OCI-LY7 (cell line): ENCODE measurements at regions of chr1 and their contacts with region 1.

Region 1: DNA sequence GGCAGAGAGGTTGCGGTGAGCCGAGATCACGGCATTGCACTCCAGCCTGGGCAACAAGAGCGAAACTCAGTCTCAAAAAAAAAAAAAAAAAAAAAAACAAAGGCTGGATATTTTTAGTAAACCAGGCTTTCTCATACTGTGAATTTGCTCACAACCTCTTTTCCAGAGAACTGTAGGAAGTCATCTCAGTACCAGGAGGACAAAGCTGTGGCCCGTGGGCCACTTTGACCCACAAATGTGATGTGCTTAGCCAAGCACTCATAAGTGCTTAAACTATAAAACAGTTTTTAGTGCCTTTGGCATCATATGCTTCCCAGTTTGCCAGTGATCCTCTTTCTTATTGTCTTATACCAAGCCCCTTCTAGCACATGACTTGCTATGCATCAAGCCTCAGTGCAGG is 46.5 kb downstream of the RNF11 start:
- DNase-seq: no peak
- H3K4me3 ChIP-seq: no peak overlapping the region
- H3K27ac ChIP-seq: no peak overlapping the region
- H3K4me1 ChIP-seq: no peaks in the 10 kb centered on the region
- CTCF ChIP-seq: no peak

Region 2: DNA sequence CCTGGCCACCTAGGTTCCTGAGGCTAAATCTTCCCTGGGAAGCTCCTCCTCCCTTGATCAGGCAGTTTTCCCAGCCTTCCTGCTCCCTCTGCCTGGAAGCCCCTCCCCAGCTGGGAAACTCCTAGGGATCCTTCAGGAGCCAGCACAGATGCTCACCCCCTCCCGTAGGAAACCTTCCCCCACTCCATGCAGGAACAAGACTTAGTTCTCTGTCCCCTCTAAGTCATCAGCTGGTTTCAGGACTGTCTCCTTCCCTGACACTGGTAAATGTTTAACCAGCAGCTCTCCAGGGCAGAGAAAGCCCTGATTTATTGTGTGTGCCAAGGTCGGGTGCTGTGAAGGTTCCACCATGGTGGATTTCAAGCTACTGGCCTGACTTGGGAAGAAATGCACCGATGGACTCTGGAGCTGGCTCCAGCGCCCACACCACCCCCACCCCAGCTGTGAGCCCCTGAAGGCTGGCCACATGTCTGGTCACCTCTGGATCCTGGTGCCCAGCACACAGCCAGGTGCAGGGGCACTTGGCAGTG is 22.8 kb after region 1 on chr1:
- CTCF ChIA-PET with region 1: no interaction called
- POLR2A ChIA-PET with region 1: interaction called, 10 read pairs
- intact Hi-C with region 1: no loop called
- DNase-seq: no peak
- H3K4me3 ChIP-seq: no peak overlapping the region
- H3K27ac ChIP-seq: no peak overlapping the region
- H3K4me1 ChIP-seq: no peaks in the 10 kb centered on the region
- CTCF ChIP-seq: no peak

Region 3: GRCh38 chr1:51316072-51316845 is 33.7 kb after region 1 on chr1:
- CTCF ChIA-PET with region 1: no interaction called
- POLR2A ChIA-PET with region 1: no interaction called
- intact Hi-C with region 1: no loop called
- DNase-seq: no peak
- H3K4me3 ChIP-seq: no peak overlapping the region
- H3K27ac ChIP-seq: no peak overlapping the region
- H3K4me1 ChIP-seq: no peaks in the 10 kb centered on the region
- CTCF ChIP-seq: no peak